ENCODE measurements at regions of chr3 and their contacts with region 1.

Region 1: DNA sequence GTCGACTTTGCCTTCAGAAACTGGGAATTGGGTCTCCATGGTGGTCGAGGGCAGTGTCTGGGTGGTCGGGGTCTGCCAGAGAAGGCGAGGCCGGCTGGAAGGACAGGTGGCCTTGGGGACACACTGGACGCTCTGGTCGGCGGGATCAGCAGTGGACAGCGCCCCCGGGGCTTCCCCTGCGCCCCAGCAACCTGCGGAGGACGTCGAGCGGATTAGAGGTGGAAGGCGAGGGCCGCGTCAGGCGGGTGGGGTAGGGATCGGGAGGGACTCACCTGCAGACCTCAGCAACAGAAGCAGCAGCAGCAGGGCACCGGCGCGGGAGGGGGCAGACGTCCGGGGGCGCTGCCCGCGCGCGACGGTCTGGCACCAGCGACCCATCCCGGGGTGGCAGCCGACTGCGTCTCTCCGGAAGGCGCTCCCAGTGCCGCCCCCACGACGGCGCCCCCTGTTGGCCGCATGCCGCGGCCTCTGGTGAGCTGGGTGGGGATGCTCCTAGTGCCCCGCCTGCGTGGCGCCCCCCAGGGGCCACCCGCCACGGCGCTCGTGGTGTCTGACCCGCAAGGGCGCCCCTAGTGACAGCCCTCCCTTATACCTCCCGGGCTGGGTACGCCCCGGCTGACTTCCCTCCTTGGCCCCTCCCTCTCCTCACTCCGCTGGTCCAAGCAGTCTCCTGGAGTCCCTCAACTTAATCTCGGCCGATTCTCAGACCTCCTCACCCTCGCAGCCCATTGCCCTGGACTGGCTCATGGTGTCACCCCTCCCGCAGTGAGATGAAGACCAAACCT is at the start of gene PRSS50:
- DNase-seq: peak; percentile 71
- total RNA-seq, gene PRSS50: not detected

Region 2: GRCh38 chr3:46998121-46998851 is 280.6 kb after region 1 on chr3:
- intact Hi-C with region 1: loop called in 1 of 2 experiments (anchors 10 kb)
- DNase-seq: peak; percentile 92

Measured in posterior vena cava (tissue), 2 donors.